HepG2 (cell line): ENCODE measurements at regions of chr3 and their contacts with region 1.

Region 1: GRCh38 chr3:47380601-47381316 is at the start of gene PTPN23:
- DNase-seq: peak; percentile 97
- ATAC-seq: peak; percentile 79
- H3K4me3 ChIP-seq: peak within 1 kb of the TSS; percentile 83 to 99 (median 87)
- H3K27ac ChIP-seq: peak within 1 kb of the TSS; percentile 99
- H3K4me1 ChIP-seq: peaks cover 82% of the 10 kb centered on the region
- H3K27me3 ChIP-seq: no peaks in the 10 kb centered on the region; a peak in 1 of 5 replicates
- CTCF ChIP-seq: peak; percentile 12; the same call in 1 of the 2 replicates
- EP300 ChIP-seq: no peak
- POLR2A ChIP-seq: peak; percentile 84 to 91
- RAD21 ChIP-seq: no peak; the same call in none of the 2 replicates
- total RNA-seq, gene PTPN23: 3.7 and 13.2 TPM in 2 replicates

Region 2: DNA sequence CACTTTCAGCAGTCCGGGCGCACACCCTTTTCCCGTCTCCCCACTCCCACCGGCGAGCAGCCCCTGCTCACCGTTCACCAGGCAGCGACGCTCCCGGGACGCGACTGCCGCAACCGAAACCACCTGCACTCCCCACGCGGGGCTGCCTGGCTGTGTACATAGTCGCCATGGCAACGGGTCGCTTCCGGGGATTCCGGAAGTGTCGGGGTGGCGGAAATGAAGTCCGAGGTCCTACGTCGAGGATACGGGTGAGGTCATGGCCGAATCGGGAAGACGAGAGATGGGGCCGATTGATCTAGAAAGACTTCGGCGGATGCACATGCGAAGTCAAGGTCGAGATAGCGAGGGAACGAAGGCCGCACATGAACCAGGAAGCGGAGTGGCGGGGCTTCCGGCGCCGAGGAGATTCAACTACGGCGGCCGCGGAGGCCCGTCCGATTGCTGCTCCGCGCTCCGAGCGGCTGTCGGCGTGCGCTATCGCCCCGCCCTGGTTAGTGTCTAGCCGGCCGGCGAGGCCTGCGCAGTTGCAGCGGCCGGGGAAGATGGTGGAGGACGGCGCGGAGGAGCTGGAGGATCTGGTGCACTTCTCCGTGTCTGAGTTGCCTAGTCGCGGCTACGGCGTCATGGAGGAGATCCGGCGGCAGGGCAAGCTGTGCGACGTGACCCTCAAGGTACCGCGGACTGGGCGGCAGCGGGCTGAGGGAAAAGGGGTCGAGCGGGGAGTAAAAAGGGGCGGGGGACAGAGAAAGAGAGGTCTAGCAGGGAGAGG is 98.2 kb before region 1 on chr3 and contains the starts of genes KIF9 and KLHL18:
- CTCF ChIA-PET with region 1: no interaction called
- POLR2A ChIA-PET with region 1: interaction called, 12 read pairs
- in situ Hi-C with region 1: no loop called
- intact Hi-C with region 1: no loop called
- DNase-seq: peak; percentile 92
- ATAC-seq: peak; percentile 91
- H3K4me3 ChIP-seq: peak within 1 kb of the TSS; percentile 74 to 89 (median 86)
- H3K27ac ChIP-seq: peak within 1 kb of the TSS; percentile 86
- H3K4me1 ChIP-seq: peaks cover 44% of the 10 kb centered on the region
- H3K27me3 ChIP-seq: no peaks in the 10 kb centered on the region; a peak in 1 of 5 replicates
- CTCF ChIP-seq: peak; percentile 47
- EP300 ChIP-seq: peak in 1 of 2 experiments; percentile 24; a peak in 2 of 4 replicates
- POLR2A ChIP-seq: peak; percentile 37 to 77
- RAD21 ChIP-seq: peak; percentile 11; the same call in 1 of the 2 replicates
- total RNA-seq, gene KIF9: 16.9 and 18.8 TPM in 2 replicates
- total RNA-seq, gene KLHL18: 18.8 and 26.1 TPM in 2 replicates

Region 3: DNA sequence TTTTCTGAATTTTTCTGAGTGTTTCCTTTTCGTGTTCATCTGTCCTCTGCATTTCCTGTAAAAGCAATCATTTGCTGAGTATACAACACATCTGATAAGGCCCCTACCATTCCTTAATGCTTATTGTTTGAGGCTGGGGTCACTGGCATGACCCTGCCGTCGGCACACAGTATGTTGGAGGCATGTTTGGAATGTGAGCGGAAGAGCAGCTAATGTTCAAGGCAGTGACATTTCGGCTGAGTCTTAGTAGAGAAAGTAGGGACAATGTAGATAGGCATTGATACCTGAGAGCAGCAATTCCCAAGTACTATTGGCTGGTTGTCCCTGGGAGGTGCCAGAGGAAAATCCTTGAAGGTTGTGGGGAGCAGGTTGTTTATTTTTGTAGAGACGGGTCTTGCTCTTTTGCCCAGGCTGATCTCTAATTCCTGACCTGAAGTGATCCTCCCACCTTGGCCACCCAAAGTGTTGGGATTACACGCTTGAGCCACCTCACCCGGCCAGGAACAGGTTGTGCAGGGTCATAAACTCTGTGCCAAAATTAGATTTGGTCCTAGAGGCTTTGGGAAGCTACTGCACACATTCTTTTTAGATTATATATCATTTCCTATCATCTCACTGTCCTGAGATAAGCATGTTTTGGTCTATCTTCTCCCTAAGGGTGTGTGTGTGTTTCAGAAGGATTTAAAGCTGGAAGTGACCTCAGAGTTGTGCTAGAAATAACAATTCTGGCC is 13.5 kb after region 1 on chr3:
- CTCF ChIA-PET with region 1: no interaction called
- POLR2A ChIA-PET with region 1: interaction called, 18 read pairs
- in situ Hi-C with region 1: no loop called
- intact Hi-C with region 1: loop called (anchors 1 kb)
- DNase-seq: peak; percentile 85
- ATAC-seq: peak; percentile 94
- H3K4me3 ChIP-seq: no peak overlapping the region; a peak in 2 of 6 replicates
- H3K27ac ChIP-seq: peak overlapping the region; percentile 59
- H3K4me1 ChIP-seq: peaks cover 48% of the 10 kb centered on the region
- H3K27me3 ChIP-seq: no peaks in the 10 kb centered on the region
- CTCF ChIP-seq: no peak
- EP300 ChIP-seq: peak in 1 of 2 experiments; percentile 63; a peak in 2 of 4 replicates
- POLR2A ChIP-seq: no peak
- RAD21 ChIP-seq: no peak